ENCODE measurements at regions of chr1 and their contacts with region 1.

Region 1: DNA sequence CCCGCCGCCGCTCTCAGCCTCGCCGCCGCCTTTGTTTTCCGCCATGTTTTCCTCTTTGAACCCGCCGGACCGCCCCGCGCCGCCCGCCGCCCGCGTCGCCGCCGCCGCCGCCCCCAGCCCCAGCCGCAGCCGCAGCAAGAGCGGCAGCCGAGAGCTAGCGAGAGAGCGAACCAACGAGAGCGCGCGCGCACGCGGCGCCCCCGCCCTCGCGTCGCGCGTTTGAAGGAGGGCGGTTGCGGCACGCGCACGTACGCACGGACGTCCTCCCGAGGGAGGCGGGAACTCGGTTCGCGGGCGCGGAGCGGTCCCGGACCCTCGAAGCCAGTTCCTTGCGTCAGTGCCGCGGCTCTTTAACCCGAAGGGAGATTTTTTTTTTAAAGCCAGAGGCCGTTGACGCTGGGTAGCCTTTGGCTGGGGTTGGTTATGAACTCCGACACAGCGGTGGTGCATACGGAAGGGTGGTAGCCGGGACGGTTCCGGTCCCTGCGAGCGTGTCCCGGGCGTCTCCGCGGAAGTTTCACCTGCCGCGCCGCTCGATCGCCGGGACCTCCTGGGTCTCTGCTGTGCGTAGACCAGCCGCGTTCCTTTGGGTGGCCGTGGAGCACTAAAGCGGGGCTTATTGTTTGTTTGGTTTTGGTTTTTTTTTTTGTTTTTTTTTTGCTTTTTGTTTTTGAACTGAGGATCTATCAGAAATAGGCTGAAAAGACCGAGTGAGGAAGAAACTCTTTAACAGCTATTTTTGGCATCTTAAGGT is at the start of gene TRIM33:
- DNase-seq: peak; percentile 91 to 95 (median 93)
- ATAC-seq: peak; percentile 89
- H3K4me3 ChIP-seq: peak within 1 kb of the TSS; percentile 71
- H3K4me3 Mint-ChIP-seq: peak within 1 kb of the TSS; percentile 86 to 99 (median 97)
- H3K27ac ChIP-seq: peak within 1 kb of the TSS; percentile 100
- H3K27ac Mint-ChIP-seq: peak within 1 kb of the TSS; percentile 98 to 100 (median 99)
- H3K4me1 ChIP-seq: peaks cover 22 to 29% of the 10 kb centered on the region in 2 donors
- H3K4me1 Mint-ChIP-seq: peaks cover 41 to 63% (median 52%) of the 10 kb centered on the region in 7 donors
- H3K27me3 ChIP-seq: no peaks in the 10 kb centered on the region
- H3K27me3 Mint-ChIP-seq: peaks cover 0 to 7% (median 0%) of the 10 kb centered on the region in 5 donors
- total RNA-seq, gene TRIM33: 43.8 to 57.6 (median 51.1) TPM

Region 2: GRCh38 chr1:114467488-114467887 is 43.7 kb before region 1 on chr1:
- CTCF ChIA-PET with region 1: no interaction called
- POLR2A ChIA-PET with region 1: interaction called, 5 read pairs
- intact Hi-C with region 1: loop called (anchors 2 to 5 kb)
- DNase-seq: peak in 3 of 9 donors; percentile 11 to 24 (median 13)
- ATAC-seq: peak; percentile 26
- H3K4me3 ChIP-seq: no peak overlapping the region
- H3K4me3 Mint-ChIP-seq: peak overlapping the region in 9 of 10 donors; percentile 14 to 73 (median 68)
- H3K27ac ChIP-seq: no peak overlapping the region
- H3K27ac Mint-ChIP-seq: peak overlapping the region in 8 of 9 donors; percentile 20 to 93 (median 64)
- H3K4me1 ChIP-seq: peaks cover 20 to 23% of the 10 kb centered on the region in 2 donors
- H3K4me1 Mint-ChIP-seq: peaks cover 45 to 80% (median 62%) of the 10 kb centered on the region in 7 donors
- H3K27me3 ChIP-seq: no peaks in the 10 kb centered on the region
- H3K27me3 Mint-ChIP-seq: no peaks in the 10 kb centered on the region

Region 3: GRCh38 chr1:114482204-114482980 is 28.8 kb before region 1 on chr1:
- CTCF ChIA-PET with region 1: no interaction called
- POLR2A ChIA-PET with region 1: interaction called, 4 read pairs
- intact Hi-C with region 1: loop called in 1 of 2 experiments (anchors 1 kb)
- DNase-seq: peak in 7 of 9 donors; percentile 11 to 54 (median 39)
- ATAC-seq: peak; percentile 90
- H3K4me3 ChIP-seq: no peak overlapping the region
- H3K4me3 Mint-ChIP-seq: peak overlapping the region; percentile 37 to 70 (median 62)
- H3K27ac ChIP-seq: peak overlapping the region; percentile 49
- H3K27ac Mint-ChIP-seq: peak overlapping the region; percentile 64 to 94 (median 81)
- H3K4me1 ChIP-seq: peaks cover 5 to 7% of the 10 kb centered on the region in 2 donors
- H3K4me1 Mint-ChIP-seq: peaks cover 34 to 74% (median 65%) of the 10 kb centered on the region in 7 donors
- H3K27me3 ChIP-seq: no peaks in the 10 kb centered on the region
- H3K27me3 Mint-ChIP-seq: no peaks in the 10 kb centered on the region

Region 4: GRCh38 chr1:114499489-114499888 is 11.7 kb before region 1 on chr1:
- CTCF ChIA-PET with region 1: no interaction called
- POLR2A ChIA-PET with region 1: interaction called, 7 read pairs
- intact Hi-C with region 1: loop called in 1 of 2 experiments (anchors 1 kb)
- DNase-seq: no peak
- ATAC-seq: no peak
- H3K4me3 ChIP-seq: no peak overlapping the region
- H3K4me3 Mint-ChIP-seq: peak overlapping the region in 4 of 10 donors; percentile 11 to 48 (median 40)
- H3K27ac ChIP-seq: no peak overlapping the region
- H3K27ac Mint-ChIP-seq: peak overlapping the region in 4 of 9 donors; percentile 14 to 74 (median 41)
- H3K4me1 ChIP-seq: no peaks in the 10 kb centered on the region
- H3K4me1 Mint-ChIP-seq: peaks cover 35 to 83% (median 64%) of the 10 kb centered on the region in 7 donors
- H3K27me3 ChIP-seq: no peaks in the 10 kb centered on the region
- H3K27me3 Mint-ChIP-seq: no peaks in the 10 kb centered on the region

Region 5: GRCh38 chr1:114581335-114582287 is 70.4 kb after region 1 on chr1 and contains the start of gene BCAS2:
- CTCF ChIA-PET with region 1: no interaction called
- POLR2A ChIA-PET with region 1: interaction called, 20 read pairs
- intact Hi-C with region 1: loop called (anchors 1 kb)
- DNase-seq: peak; percentile 71 to 98 (median 97)
- ATAC-seq: peak; percentile 97
- H3K4me3 ChIP-seq: peak within 1 kb of the TSS; percentile 76
- H3K4me3 Mint-ChIP-seq: peak within 1 kb of the TSS; percentile 92 to 99 (median 98)
- H3K27ac ChIP-seq: peak within 1 kb of the TSS; percentile 93
- H3K27ac Mint-ChIP-seq: peak within 1 kb of the TSS; percentile 95 to 99 (median 98)
- H3K4me1 ChIP-seq: peaks cover 21 to 23% of the 10 kb centered on the region in 2 donors
- H3K4me1 Mint-ChIP-seq: peaks cover 14 to 55% (median 41%) of the 10 kb centered on the region in 7 donors
- H3K27me3 ChIP-seq: peaks cover 0 to 3% of the 10 kb centered on the region in 2 donors
- H3K27me3 Mint-ChIP-seq: peaks cover 0 to 4% (median 4%) of the 10 kb centered on the region in 5 donors
- total RNA-seq, gene BCAS2: 32.3 to 87.1 (median 46.0) TPM

Region 6: GRCh38 chr1:114648502-114648901 is 137.3 kb after region 1 on chr1:
- CTCF ChIA-PET with region 1: no interaction called
- POLR2A ChIA-PET with region 1: no interaction called
- intact Hi-C with region 1: no loop called
- DNase-seq: no peak
- ATAC-seq: no peak
- H3K4me3 ChIP-seq: no peak overlapping the region
- H3K4me3 Mint-ChIP-seq: no peak overlapping the region
- H3K27ac ChIP-seq: no peak overlapping the region
- H3K27ac Mint-ChIP-seq: no peak overlapping the region
- H3K4me1 ChIP-seq: no peaks in the 10 kb centered on the region
- H3K4me1 Mint-ChIP-seq: no peaks in the 10 kb centered on the region
- H3K27me3 ChIP-seq: no peaks in the 10 kb centered on the region
- H3K27me3 Mint-ChIP-seq: peaks cover 0 to 4% (median 0%) of the 10 kb centered on the region in 5 donors

Region 7: GRCh38 chr1:114716304-114717170 is 205.3 kb after region 1 on chr1 and contains the start of gene NRAS:
- CTCF ChIA-PET with region 1: interaction called, 3 read pairs
- POLR2A ChIA-PET with region 1: interaction called, 4 read pairs
- intact Hi-C with region 1: loop called (anchors 1 kb)
- DNase-seq: peak; percentile 90 to 96 (median 94)
- ATAC-seq: peak; percentile 98
- H3K4me3 ChIP-seq: peak within 1 kb of the TSS; percentile 98
- H3K4me3 Mint-ChIP-seq: peak within 1 kb of the TSS; percentile 91 to 100 (median 96)
- H3K27ac ChIP-seq: peak within 1 kb of the TSS; percentile 98
- H3K27ac Mint-ChIP-seq: peak within 1 kb of the TSS; percentile 93 to 99 (median 97)
- H3K4me1 ChIP-seq: peaks cover 17 to 20% of the 10 kb centered on the region in 2 donors
- H3K4me1 Mint-ChIP-seq: peaks cover 10 to 34% (median 25%) of the 10 kb centered on the region in 7 donors
- H3K27me3 ChIP-seq: no peaks in the 10 kb centered on the region
- H3K27me3 Mint-ChIP-seq: no peaks in the 10 kb centered on the region
- total RNA-seq, gene NRAS: 22.3 to 56.0 (median 25.0) TPM

Region 8: DNA sequence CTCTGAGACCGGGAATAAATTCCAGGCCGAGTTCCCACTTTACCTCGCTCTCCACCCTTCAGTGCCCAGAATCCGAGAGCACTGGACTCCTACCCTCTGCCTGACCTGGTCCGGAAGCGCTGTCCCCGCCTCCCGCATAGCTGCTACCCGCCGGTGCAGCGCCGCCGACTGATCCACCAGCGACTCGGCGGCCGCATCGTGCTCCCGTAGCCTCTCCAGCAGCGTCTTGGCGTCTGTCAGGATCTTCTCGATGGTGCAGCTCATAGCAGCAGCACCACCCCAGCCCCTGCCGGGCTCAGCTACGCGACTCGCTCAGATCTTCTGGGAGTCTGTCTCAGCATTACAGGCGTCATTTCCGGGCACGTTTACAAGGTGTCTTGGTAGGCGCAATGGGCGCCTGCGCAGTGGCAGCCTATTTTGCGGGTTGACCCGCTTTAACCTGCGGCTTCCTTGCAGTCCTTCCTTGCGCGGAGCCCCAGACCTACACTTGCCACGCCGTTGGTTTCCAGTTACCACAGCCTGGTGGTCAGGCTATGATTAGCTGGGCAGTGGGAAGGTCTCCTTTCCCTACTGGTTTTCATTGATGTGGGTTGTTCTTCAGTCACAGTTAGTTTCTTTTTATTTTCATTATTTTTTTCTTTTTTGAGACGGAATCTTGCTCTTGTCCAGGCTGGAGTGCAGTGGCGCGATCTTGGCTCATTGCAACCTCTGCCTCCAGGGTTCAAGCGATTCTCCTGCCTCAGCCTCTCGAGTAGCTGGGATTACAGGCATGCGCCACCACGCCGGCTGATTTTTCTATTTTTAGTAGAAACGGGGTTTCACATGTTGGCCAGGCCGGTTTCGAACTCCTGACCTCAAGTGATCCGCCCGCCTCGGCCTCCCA is 269.4 kb after region 1 on chr1 and contains the start of gene SIKE1:
- CTCF ChIA-PET with region 1: no interaction called
- POLR2A ChIA-PET with region 1: interaction called, 9 read pairs
- intact Hi-C with region 1: loop called (anchors 1 to 2 kb)
- DNase-seq: peak; percentile 82 to 98 (median 95)
- ATAC-seq: peak; percentile 99
- H3K4me3 ChIP-seq: peak within 1 kb of the TSS; percentile 78
- H3K4me3 Mint-ChIP-seq: peak within 1 kb of the TSS; percentile 98 to 100 (median 100)
- H3K27ac ChIP-seq: peak within 1 kb of the TSS; percentile 87
- H3K27ac Mint-ChIP-seq: peak within 1 kb of the TSS; percentile 96 to 100 (median 99)
- H3K4me1 ChIP-seq: peaks cover 0 to 8% of the 10 kb centered on the region in 2 donors
- H3K4me1 Mint-ChIP-seq: peaks cover 19 to 40% (median 30%) of the 10 kb centered on the region in 7 donors
- H3K27me3 ChIP-seq: no peaks in the 10 kb centered on the region
- H3K27me3 Mint-ChIP-seq: peaks cover 0 to 17% (median 0%) of the 10 kb centered on the region in 5 donors
- total RNA-seq, gene SIKE1: 43.4 to 69.4 (median 61.2) TPM